Heart right ventricle (tissue), 16 donors: ENCODE measurements at regions of chr21 and their contacts with region 1.

Region 1: GRCh38 chr21:37463083-37463801 is 96.7 kb downstream of the DYRK1A start:
- DNase-seq: no peak
- ATAC-seq: peak; percentile 28 to 72 (median 62)
- H3K4me3 ChIP-seq: peak overlapping the region in 3 of 10 donors; percentile 5 to 27 (median 16)
- H3K27ac ChIP-seq: peak overlapping the region in 3 of 10 donors; percentile 8 to 46 (median 32)
- H3K4me1 ChIP-seq: peaks cover 6 to 78% (median 69%) of the 10 kb centered on the region in 9 donors
- H3K27me3 ChIP-seq: no peaks in the 10 kb centered on the region
- CTCF ChIP-seq: peak; percentile 38 to 58 (median 50)

Region 2: DNA sequence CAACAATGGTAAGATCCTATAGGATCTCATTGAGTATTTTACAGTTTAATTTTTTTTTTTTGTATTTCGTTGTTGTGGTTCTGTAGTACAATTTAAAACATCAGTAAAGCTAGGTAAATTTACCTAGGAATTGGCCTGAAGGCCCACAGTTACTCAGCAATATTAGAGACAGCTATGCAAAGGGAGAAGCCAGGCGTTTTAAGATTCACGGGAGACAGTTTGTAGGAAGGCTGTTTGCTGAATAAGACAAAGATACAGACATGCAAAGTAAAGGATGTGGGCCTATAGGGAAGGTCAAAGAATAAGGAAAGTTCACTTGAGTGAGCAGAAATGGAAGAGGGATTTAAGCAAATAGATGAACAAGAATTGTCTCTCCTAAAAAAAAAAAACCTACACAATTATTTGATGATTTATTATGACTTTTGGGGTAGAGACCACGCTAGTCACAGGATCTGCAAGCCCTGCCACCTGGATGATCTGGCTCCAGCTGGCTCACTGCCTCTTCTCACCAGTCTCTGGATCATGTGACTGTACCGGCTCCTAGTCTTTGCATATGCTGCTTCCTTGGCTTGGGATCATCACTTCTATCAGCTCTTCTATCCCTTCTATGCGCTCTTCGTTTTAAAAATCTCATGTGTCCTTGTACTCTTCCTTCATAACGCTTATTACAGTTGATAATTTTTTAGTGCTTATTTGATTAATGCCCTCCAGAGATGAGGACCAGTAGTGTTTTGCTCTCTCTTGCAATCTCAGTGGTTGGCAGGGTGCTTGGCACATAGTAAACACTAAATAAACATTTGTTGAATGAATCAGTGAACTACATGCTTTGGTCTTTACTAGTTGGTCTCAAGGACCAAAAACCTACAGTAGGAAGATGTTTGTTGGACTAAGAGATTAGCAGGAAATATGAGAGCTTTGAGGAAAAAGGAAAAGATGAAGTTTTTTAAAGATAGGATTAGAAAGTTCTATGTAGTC is 82.6 kb before region 1 on chr21:
- intact Hi-C with region 1: loop called in 4 of 10 experiments (anchors 5 to 10 kb)
- DNase-seq: peak in 1 of 2 donors; percentile 28
- ATAC-seq: peak in 6 of 8 donors; percentile 47 to 67 (median 56)
- H3K4me3 ChIP-seq: no peak overlapping the region
- H3K27ac ChIP-seq: peak overlapping the region in 5 of 10 donors; percentile 0 to 48 (median 19)
- H3K4me1 ChIP-seq: peaks cover 10 to 99% (median 90%) of the 10 kb centered on the region in 9 donors
- H3K27me3 ChIP-seq: no peaks in the 10 kb centered on the region
- CTCF ChIP-seq: no peak

Region 3: GRCh38 chr21:37412603-37413360 is 50.5 kb before region 1 on chr21:
- intact Hi-C with region 1: no loop called
- DNase-seq: no peak
- ATAC-seq: no peak
- H3K4me3 ChIP-seq: no peak overlapping the region
- H3K27ac ChIP-seq: peak overlapping the region in 1 of 10 donors; percentile 4
- H3K4me1 ChIP-seq: peaks cover 3 to 100% (median 86%) of the 10 kb centered on the region in 9 donors
- H3K27me3 ChIP-seq: no peaks in the 10 kb centered on the region
- CTCF ChIP-seq: no peak

Region 4: GRCh38 chr21:37546949-37547614 is 83.8 kb after region 1 on chr21:
- intact Hi-C with region 1: no loop called
- DNase-seq: no peak
- ATAC-seq: no peak
- H3K4me3 ChIP-seq: no peak overlapping the region
- H3K27ac ChIP-seq: no peak overlapping the region
- H3K4me1 ChIP-seq: peaks cover 4 to 15% (median 12%) of the 10 kb centered on the region in 9 donors
- H3K27me3 ChIP-seq: peaks cover 0 to 10% (median 0%) of the 10 kb centered on the region in 7 donors
- CTCF ChIP-seq: no peak

Region 5: DNA sequence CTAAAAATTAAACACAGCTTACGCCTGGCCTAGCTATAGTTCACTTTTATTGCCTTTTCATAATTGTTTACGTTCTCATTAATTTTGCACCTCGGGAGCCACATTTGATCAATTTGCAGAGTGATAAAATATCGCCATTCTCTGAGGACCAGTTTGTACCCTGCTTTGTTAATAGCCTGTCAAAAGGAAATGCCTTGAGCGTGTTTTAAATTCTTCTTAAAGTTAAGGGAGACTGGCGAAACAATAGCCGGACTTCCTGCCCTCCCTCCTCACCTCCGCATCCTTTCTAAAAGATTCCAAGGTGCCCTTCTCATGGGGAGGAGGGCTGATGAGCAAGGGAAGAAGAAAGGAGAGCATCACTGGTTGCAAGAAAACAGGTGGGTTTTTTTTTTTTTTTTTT is 181.4 kb after region 1 on chr21:
- intact Hi-C with region 1: no loop called
- DNase-seq: peak in 1 of 2 donors; percentile 21
- ATAC-seq: peak in 6 of 8 donors; percentile 51 to 84 (median 80)
- H3K4me3 ChIP-seq: no peak overlapping the region
- H3K27ac ChIP-seq: peak overlapping the region in 7 of 10 donors; percentile 33 to 73 (median 51)
- H3K4me1 ChIP-seq: peaks cover 0 to 13% (median 0%) of the 10 kb centered on the region in 9 donors
- H3K27me3 ChIP-seq: peaks cover 0 to 5% (median 0%) of the 10 kb centered on the region in 7 donors
- CTCF ChIP-seq: no peak